B cell (primary cell): ENCODE measurements at regions of chr2 and their contacts with region 1.

Region 1: DNA sequence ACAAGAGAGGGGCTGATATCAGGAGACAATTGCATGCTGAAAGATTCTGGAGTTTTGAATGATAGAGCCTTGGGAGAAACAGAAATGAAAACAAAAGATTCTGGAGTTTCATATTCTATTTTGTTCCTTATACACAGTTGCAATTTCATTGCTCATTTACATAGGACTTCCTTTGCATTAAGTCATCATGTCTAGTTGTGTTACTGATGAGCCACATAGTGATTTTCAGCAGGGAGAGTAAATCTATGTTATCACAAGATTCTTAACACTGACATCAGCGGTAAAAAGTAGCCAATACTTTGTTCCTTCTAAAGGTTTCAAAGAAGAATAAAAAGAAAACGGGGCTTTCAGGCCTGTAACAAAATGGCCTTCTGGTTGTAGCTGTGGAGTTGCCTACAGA is 7.1 kb downstream of the ADAM17 start:
- DNase-seq: peak; percentile 77
- ATAC-seq: peak; percentile 63
- H3K4me3 ChIP-seq: peak overlapping the region; percentile 16 to 66 (median 55)
- H3K4me3 Mint-ChIP-seq: peak overlapping the region; percentile 92
- H3K27ac ChIP-seq: peak overlapping the region; percentile 80 to 86
- H3K27ac Mint-ChIP-seq: peak overlapping the region; percentile 88
- H3K4me1 ChIP-seq: peaks cover 83 to 86% of the 10 kb centered on the region in 2 donors
- H3K4me1 Mint-ChIP-seq: peaks cover 72% of the 10 kb centered on the region
- H3K27me3 ChIP-seq: no peaks in the 10 kb centered on the region
- H3K27me3 Mint-ChIP-seq: no peaks in the 10 kb centered on the region
- CTCF ChIP-seq: no peak

Region 2: GRCh38 chr2:9613291-9613690 is 64.8 kb after region 1 on chr2:
- CTCF ChIA-PET with region 1: no interaction called
- POLR2A ChIA-PET with region 1: no interaction called
- intact Hi-C with region 1: loop called (anchors 2 kb)
- DNase-seq: no peak
- ATAC-seq: no peak
- H3K4me3 ChIP-seq: no peak overlapping the region
- H3K4me3 Mint-ChIP-seq: no peak overlapping the region
- H3K27ac ChIP-seq: no peak overlapping the region
- H3K27ac Mint-ChIP-seq: no peak overlapping the region
- H3K4me1 ChIP-seq: peaks cover 14 to 20% of the 10 kb centered on the region in 2 donors
- H3K4me1 Mint-ChIP-seq: peaks cover 74% of the 10 kb centered on the region
- H3K27me3 ChIP-seq: no peaks in the 10 kb centered on the region
- H3K27me3 Mint-ChIP-seq: no peaks in the 10 kb centered on the region
- CTCF ChIP-seq: no peak